ENCODE measurements at regions of chr1 and their contacts with region 1.

Region 1: DNA sequence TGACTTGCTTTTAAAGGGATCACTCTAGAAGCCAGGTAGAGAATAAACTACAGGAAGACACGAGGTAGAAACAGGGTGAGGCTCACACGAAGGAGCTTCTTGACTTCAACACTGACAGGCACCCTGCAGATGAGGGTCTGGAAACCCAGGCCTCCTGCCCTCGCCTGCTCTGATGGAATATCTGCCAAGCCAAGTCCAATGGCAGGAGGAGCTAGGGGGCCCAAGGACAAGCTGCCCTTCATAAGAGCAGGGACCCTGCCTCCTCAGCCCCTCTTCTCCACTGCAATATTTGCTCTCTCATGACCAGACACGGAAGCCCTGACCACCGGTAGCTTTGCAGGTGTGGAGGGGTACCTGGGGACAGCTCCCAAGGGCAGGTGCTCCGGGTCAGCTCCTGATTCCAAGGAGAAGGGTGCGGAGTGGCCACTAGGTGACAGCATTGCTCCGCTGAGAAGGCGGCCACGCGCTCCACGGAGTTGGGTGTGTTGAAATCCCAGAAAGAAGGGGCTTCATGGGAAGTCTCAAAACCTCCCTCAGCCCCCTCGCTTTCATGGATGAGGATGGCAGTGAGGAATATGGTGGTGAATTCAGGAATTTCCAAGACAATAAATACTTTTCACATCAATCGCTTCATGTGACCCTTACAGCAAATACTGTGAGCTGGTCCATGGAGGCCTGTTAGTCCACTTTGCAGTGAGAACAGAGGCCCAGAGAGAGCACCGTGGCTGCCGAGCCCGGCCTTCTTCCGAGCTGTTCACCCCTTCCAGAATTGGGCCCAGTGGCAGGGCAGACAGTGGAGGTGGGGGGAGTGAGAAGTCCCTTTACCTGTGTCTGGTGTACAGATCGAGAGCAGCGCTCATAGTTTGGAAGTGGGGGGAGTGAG is 33.2 kb upstream of the PAX7 start:
- DNase-seq: peak; percentile 14 to 19
- ATAC-seq: no peak
- H3K4me3 ChIP-seq: no peak overlapping the region
- H3K27ac ChIP-seq: no peak overlapping the region
- H3K4me1 ChIP-seq: no peaks in the 10 kb centered on the region
- H3K27me3 ChIP-seq: peaks cover 0 to 10% (median 9%) of the 10 kb centered on the region in 3 donors
- CTCF ChIP-seq: peak; percentile 58 to 87 (median 82)
- POLR2A ChIP-seq: no peak

Region 2: GRCh38 chr1:18681423-18681835 is 84.0 kb after region 1 on chr1:
- in situ Hi-C with region 1: loop called in 1 of 4 experiments (anchors 5 kb)
- intact Hi-C with region 1: loop called (anchors 2 kb)
- DNase-seq: no peak
- ATAC-seq: peak; percentile 64 to 72
- H3K4me3 ChIP-seq: no peak overlapping the region
- H3K27ac ChIP-seq: no peak overlapping the region
- H3K4me1 ChIP-seq: no peaks in the 10 kb centered on the region
- H3K27me3 ChIP-seq: peaks cover 0 to 6% (median 0%) of the 10 kb centered on the region in 3 donors
- CTCF ChIP-seq: peak in 3 of 5 experiments; percentile 22 to 54 (median 50)
- POLR2A ChIP-seq: no peak

Region 3: GRCh38 chr1:18820791-18821641 is 223.6 kb after region 1 on chr1:
- in situ Hi-C with region 1: loop called (anchors 5 to 25 kb)
- intact Hi-C with region 1: loop called (anchors 1 kb)
- DNase-seq: peak; percentile 41 to 66
- ATAC-seq: peak; percentile 84 to 91
- H3K4me3 ChIP-seq: no peak overlapping the region
- H3K27ac ChIP-seq: no peak overlapping the region
- H3K4me1 ChIP-seq: no peaks in the 10 kb centered on the region
- H3K27me3 ChIP-seq: peaks cover 13 to 33% (median 21%) of the 10 kb centered on the region in 3 donors
- CTCF ChIP-seq: peak; percentile 63 to 89 (median 81)
- POLR2A ChIP-seq: no peak

Region 4: DNA sequence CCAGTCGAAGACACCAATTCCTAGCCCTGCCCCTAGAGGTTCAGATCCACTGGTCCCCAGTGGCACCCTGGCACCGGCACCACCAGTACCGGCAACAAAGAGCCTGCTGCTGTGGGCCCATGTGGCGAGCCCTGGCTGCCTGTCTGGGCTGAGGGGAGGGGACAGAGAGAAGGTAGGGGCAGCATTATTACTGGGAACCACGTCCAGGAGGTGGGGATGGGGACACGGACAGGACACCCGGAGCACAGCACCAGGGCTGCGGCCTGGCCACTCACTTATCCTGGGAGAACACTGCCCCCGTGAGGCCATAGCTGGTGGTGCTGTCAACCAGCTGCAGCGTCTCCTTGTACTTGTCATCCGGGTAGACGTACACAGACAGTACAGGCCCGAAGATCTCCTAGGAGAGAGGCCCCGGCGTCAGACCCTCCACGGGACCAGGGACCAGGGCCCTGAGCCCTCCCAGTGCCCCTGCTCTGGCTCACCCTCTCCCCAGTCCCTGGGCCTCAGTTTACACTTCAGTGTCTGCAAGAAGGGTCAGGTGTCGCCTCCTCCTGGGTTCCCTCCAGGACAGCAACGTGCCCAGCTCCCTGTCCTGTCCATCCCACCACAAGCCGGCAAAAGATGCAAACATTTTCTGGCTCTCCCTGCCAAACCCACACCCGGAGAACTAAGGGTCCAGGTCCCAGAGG is 277.9 kb after region 1 on chr1:
- in situ Hi-C with region 1: no loop called
- intact Hi-C with region 1: loop called (anchors 2 kb)
- DNase-seq: peak; percentile 49 to 71
- ATAC-seq: peak; percentile 46 to 80
- H3K4me3 ChIP-seq: no peak overlapping the region
- H3K27ac ChIP-seq: no peak overlapping the region
- H3K4me1 ChIP-seq: peaks cover 0 to 4% of the 10 kb centered on the region in 2 donors
- H3K27me3 ChIP-seq: no peaks in the 10 kb centered on the region
- CTCF ChIP-seq: peak; percentile 41 to 82 (median 70)
- POLR2A ChIP-seq: no peak